A549 (cell line): ENCODE measurements at regions of chrX and their contacts with region 1.

Region 1: GRCh38 chrX:136880452-136881013 is at the start of gene RBMX:
- DNase-seq: peak; percentile 90 to 95
- ATAC-seq: peak; percentile 97 to 98
- H3K4me3 ChIP-seq: peak within 1 kb of the TSS; percentile 71
- H3K27ac ChIP-seq: peak within 1 kb of the TSS; percentile 95 to 98
- H3K4me1 ChIP-seq: peaks cover 25% of the 10 kb centered on the region; the same call in 2 of the 3 replicates
- CTCF ChIP-seq: no peak
- EP300 ChIP-seq: no peak
- POLR2A ChIP-seq: peak; percentile 99
- RAD21 ChIP-seq: no peak
- polyA plus RNA-seq, gene RBMX: 220 and 278 TPM in 2 replicates

Region 2: DNA sequence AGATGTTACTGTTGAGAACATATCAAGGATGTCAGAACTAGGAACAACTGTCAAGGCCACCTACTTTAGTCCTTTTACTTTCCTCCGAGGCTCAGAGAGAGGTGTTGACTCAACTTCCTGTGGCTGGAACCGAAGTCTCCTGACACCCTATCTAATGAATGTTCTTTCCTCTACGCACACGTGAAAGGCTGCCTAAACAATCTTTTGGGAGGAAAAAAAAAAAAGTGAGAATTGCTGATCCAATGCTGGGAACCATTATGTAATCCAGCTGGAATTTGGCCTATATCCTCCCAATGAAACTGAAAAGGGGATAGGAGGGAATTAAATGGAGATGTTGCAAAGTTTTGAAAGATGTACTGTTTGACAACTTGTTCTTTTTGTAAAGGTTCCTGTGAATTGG is 621.0 kb before region 1 on chrX:
- CTCF ChIA-PET with region 1: no interaction called
- POLR2A ChIA-PET with region 1: no interaction called
- DNase-seq: no peak
- ATAC-seq: no peak
- H3K4me3 ChIP-seq: no peak overlapping the region
- H3K27ac ChIP-seq: no peak overlapping the region
- H3K4me1 ChIP-seq: peaks cover 12% of the 10 kb centered on the region
- CTCF ChIP-seq: no peak
- EP300 ChIP-seq: no peak
- POLR2A ChIP-seq: no peak
- RAD21 ChIP-seq: no peak

Region 3: GRCh38 chrX:136767104-136767941 is 113.2 kb before region 1 on chrX:
- CTCF ChIA-PET with region 1: no interaction called
- POLR2A ChIA-PET with region 1: interaction called, 11 read pairs
- DNase-seq: peak; percentile 36 to 53
- ATAC-seq: peak; percentile 97 to 98
- H3K4me3 ChIP-seq: peak overlapping the region; percentile 72
- H3K27ac ChIP-seq: peak overlapping the region; percentile 54 to 81; a peak in 5 of 6 replicates
- H3K4me1 ChIP-seq: no peaks in the 10 kb centered on the region
- CTCF ChIP-seq: no peak; the same call in 2 of the 3 replicates
- EP300 ChIP-seq: no peak
- POLR2A ChIP-seq: no peak
- RAD21 ChIP-seq: no peak

Region 4: GRCh38 chrX:136866337-136867095 is 14.0 kb before region 1 on chrX:
- CTCF ChIA-PET with region 1: interaction called, 3 read pairs
- POLR2A ChIA-PET with region 1: interaction called, 24 read pairs
- DNase-seq: peak in 1 of 2 experiments; percentile 12
- ATAC-seq: peak; percentile 56 to 71; a peak in 4 of 6 replicates
- H3K4me3 ChIP-seq: no peak overlapping the region
- H3K27ac ChIP-seq: no peak overlapping the region
- H3K4me1 ChIP-seq: peaks cover 16% of the 10 kb centered on the region
- CTCF ChIP-seq: no peak
- EP300 ChIP-seq: no peak
- POLR2A ChIP-seq: no peak
- RAD21 ChIP-seq: no peak

Region 5: DNA sequence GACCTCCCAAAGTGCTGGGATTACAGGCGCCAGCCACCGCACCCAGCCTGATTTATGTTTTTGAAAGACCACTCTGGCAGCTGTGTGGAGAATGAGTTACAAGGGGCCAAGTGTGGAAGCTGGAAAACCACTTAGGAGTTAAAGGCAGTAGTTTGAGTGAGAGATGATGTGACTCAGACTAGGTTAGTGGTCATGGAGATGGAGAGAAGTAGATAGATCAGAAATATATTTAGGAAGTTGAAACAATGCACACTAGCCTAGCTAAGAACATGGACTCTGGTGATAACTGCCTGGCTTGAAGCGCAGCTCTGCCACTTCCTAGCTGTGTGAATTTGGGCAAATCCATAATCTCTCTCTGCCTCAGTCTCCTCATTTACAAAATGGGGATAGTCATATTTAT is 11.9 kb after region 1 on chrX:
- CTCF ChIA-PET with region 1: no interaction called
- POLR2A ChIA-PET with region 1: interaction called, 10 read pairs
- DNase-seq: no peak
- ATAC-seq: no peak
- H3K4me3 ChIP-seq: no peak overlapping the region
- H3K27ac ChIP-seq: no peak overlapping the region
- H3K4me1 ChIP-seq: no peaks in the 10 kb centered on the region
- CTCF ChIP-seq: no peak
- EP300 ChIP-seq: no peak
- POLR2A ChIP-seq: no peak
- RAD21 ChIP-seq: no peak

Region 6: GRCh38 chrX:136909706-136910564 is 29.4 kb after region 1 on chrX:
- CTCF ChIA-PET with region 1: no interaction called
- POLR2A ChIA-PET with region 1: interaction called, 32 read pairs
- DNase-seq: peak; percentile 73 to 92
- ATAC-seq: peak; percentile 87 to 89
- H3K4me3 ChIP-seq: peak overlapping the region; percentile 84
- H3K27ac ChIP-seq: peak overlapping the region; percentile 91 to 96
- H3K4me1 ChIP-seq: peaks cover 8% of the 10 kb centered on the region; the same call in 2 of the 3 replicates
- CTCF ChIP-seq: no peak
- EP300 ChIP-seq: no peak
- POLR2A ChIP-seq: peak; percentile 28; the same call in 1 of the 2 replicates
- RAD21 ChIP-seq: no peak